ENCODE measurements at regions of chr1 and their contacts with region 1.

Region 1: GRCh38 chr1:186330758-186331157 is 44.3 kb downstream of the TPR start:
- DNase-seq: no peak
- CTCF ChIP-seq: peak; percentile 5

Region 2: DNA sequence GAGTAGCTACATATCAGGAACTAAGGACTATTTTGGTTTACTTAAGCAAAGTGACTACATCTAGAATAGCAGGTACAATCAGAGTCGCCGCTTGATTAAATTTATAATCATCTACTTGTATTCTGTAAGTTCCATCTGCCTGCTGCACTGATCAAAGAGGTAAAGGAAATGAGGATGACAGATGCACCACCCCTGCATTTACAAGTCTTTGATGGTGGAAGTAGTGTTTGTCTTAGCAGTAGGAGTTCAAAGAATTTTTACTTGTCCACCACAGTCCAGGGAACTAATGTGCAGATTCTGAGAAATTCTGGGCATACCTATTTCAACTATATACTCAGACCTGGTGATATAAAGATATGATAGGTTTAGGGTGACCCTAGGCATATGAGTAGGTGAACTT is 829.7 kb before region 1 on chr1:
- CTCF ChIA-PET with region 1: no interaction called
- POLR2A ChIA-PET with region 1: no interaction called
- DNase-seq: no peak
- CTCF ChIP-seq: no peak

Region 3: GRCh38 chr1:186340772-186341171 is 10.0 kb after region 1 on chr1:
- CTCF ChIA-PET with region 1: interaction called, 24 read pairs
- POLR2A ChIA-PET with region 1: no interaction called
- DNase-seq: no peak
- CTCF ChIP-seq: no peak

Measured in GM10248 (cell line).